GM12878 (cell line): ENCODE measurements at regions of chr2 and their contacts with region 1.

Region 1: DNA sequence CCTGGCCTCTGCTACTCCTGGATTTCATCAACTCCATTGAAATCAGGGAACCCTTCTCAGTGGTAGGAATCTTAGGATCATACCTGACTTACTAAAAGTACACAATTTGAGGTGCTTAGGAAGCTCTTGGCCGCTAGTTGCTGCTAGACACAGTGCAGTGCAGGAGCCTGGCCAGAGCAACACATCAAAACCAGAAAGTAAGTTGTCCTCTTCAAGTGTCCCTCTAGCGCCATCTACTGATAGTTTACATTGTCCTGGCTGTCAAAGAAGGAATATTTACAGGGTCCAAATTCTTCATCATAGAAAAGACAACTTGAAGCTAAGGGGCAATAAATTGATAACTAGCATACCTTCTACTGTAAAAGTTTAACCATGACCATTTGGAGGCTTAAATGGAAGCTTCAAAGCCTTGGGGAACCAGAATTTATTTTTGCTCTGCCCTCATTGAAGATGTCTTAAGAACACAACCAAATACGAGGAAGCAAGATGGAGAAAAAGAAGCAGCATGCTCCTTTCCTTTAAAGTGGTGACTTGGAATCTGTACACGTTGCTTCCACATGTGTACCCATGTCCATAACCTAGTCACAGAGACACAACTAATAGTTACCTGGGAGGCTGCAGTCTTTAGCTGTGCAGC is 889.1 kb upstream of the GCFC2 start:
- DNase-seq: peak; percentile 43
- ATAC-seq: peak; percentile 100
- H3K4me3 ChIP-seq: no peak overlapping the region
- H3K27ac ChIP-seq: no peak overlapping the region
- H3K4me1 ChIP-seq: no peaks in the 10 kb centered on the region
- H3K27me3 ChIP-seq: no peaks in the 10 kb centered on the region
- CTCF ChIP-seq: peak; percentile 77 to 93 (median 84)
- EP300 ChIP-seq: no peak
- POLR2A ChIP-seq: no peak
- RAD21 ChIP-seq: peak; percentile 89

Region 2: DNA sequence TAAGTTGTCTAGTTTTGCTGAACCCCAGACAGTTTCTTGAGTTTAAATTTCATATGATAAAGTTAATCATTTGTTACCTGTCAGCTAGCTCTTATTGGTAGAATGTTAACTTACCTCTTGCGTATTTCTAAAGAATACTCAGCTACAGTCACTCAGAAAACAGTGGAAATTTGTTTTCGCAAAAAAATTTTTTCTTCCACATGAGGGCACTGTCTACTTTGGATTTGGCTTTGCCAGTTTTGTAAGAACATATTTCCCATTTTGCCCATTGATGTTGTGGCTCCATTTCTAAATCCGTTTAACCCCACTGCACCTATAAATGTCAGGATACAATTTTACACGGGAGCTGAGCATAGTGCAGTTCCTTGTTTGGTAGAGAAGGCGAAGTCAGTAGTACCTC is 870.0 kb before region 1 on chr2:
- CTCF ChIA-PET with region 1: no interaction called
- POLR2A ChIA-PET with region 1: no interaction called
- RAD21 ChIA-PET with region 1: no interaction called
- SMC1A ChIA-PET with region 1: no interaction called
- in situ Hi-C with region 1: no loop called
- intact Hi-C with region 1: loop called (anchors 5 kb)
- DNase-seq: no peak
- ATAC-seq: no peak
- H3K4me3 ChIP-seq: no peak overlapping the region
- H3K27ac ChIP-seq: no peak overlapping the region
- H3K4me1 ChIP-seq: no peaks in the 10 kb centered on the region
- H3K27me3 ChIP-seq: no peaks in the 10 kb centered on the region
- CTCF ChIP-seq: peak in 2 of 3 experiments; percentile 30 to 35; a peak in 2 of 6 replicates
- EP300 ChIP-seq: no peak
- POLR2A ChIP-seq: no peak
- RAD21 ChIP-seq: peak; percentile 61

Region 3: DNA sequence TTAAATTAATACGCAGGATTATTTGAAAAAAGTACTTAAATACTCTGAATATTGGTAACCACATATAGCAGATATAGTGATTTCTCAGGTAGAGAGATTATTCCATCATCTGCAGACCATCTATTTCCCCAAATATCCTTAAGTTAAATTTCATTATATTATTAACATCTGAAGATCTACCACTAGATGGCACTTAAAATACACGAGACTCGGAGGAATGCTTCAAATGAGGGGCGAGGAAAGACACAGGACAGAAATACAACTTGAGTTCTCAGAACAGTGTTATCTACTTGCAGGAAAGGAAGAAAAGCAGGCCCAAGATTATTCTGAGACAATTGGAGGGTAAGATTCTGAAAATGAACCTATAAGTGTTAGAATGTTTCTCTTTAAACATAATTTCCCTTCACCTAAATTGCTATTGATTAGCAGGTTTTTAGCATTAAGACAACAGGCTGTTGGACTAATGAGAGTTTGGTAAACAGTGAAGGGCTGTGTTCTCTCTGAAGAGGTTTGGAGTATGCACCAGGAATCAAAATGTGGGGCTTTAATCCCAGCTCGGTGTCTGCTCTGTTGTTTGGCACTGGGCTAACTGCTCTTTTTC is 812.2 kb before region 1 on chr2:
- CTCF ChIA-PET with region 1: interaction called, 11 read pairs
- POLR2A ChIA-PET with region 1: no interaction called
- RAD21 ChIA-PET with region 1: interaction called, 6 read pairs
- SMC1A ChIA-PET with region 1: interaction called, 5 read pairs
- in situ Hi-C with region 1: loop called (anchors 5 kb)
- intact Hi-C with region 1: loop called (anchors 1 kb)
- DNase-seq: no peak
- ATAC-seq: peak; percentile 76
- H3K4me3 ChIP-seq: no peak overlapping the region
- H3K27ac ChIP-seq: no peak overlapping the region
- H3K4me1 ChIP-seq: peaks cover 14% of the 10 kb centered on the region
- H3K27me3 ChIP-seq: no peaks in the 10 kb centered on the region
- CTCF ChIP-seq: peak; percentile 38 to 65 (median 40)
- EP300 ChIP-seq: no peak
- POLR2A ChIP-seq: no peak
- RAD21 ChIP-seq: peak; percentile 91

Region 4: GRCh38 chr2:75896779-75897366 is 703.0 kb before region 1 on chr2:
- CTCF ChIA-PET with region 1: interaction called, 12 read pairs
- POLR2A ChIA-PET with region 1: no interaction called
- RAD21 ChIA-PET with region 1: interaction called, 9 read pairs
- SMC1A ChIA-PET with region 1: interaction called, 7 read pairs
- in situ Hi-C with region 1: loop called (anchors 5 kb)
- intact Hi-C with region 1: loop called (anchors 1 kb)
- DNase-seq: no peak
- ATAC-seq: peak; percentile 92
- H3K4me3 ChIP-seq: no peak overlapping the region
- H3K27ac ChIP-seq: no peak overlapping the region
- H3K4me1 ChIP-seq: no peaks in the 10 kb centered on the region
- H3K27me3 ChIP-seq: no peaks in the 10 kb centered on the region
- CTCF ChIP-seq: peak; percentile 74 to 88 (median 79)
- EP300 ChIP-seq: no peak
- POLR2A ChIP-seq: no peak
- RAD21 ChIP-seq: peak; percentile 59

Region 5: GRCh38 chr2:76204048-76204447 is 395.8 kb before region 1 on chr2:
- CTCF ChIA-PET with region 1: interaction called, 123 read pairs
- POLR2A ChIA-PET with region 1: no interaction called
- RAD21 ChIA-PET with region 1: interaction called, 32 read pairs
- SMC1A ChIA-PET with region 1: interaction called, 51 read pairs
- in situ Hi-C with region 1: loop called (anchors 5 kb)
- intact Hi-C with region 1: no loop called
- DNase-seq: no peak
- ATAC-seq: peak; percentile 84
- H3K4me3 ChIP-seq: no peak overlapping the region
- H3K27ac ChIP-seq: no peak overlapping the region
- H3K4me1 ChIP-seq: no peaks in the 10 kb centered on the region
- H3K27me3 ChIP-seq: no peaks in the 10 kb centered on the region
- CTCF ChIP-seq: no peak
- EP300 ChIP-seq: no peak
- POLR2A ChIP-seq: no peak
- RAD21 ChIP-seq: no peak

Region 6: GRCh38 chr2:76584474-76584873 is 15.4 kb before region 1 on chr2:
- CTCF ChIA-PET with region 1: interaction called, 10 read pairs
- POLR2A ChIA-PET with region 1: no interaction called
- RAD21 ChIA-PET with region 1: no interaction called
- SMC1A ChIA-PET with region 1: interaction called, 14 read pairs
- in situ Hi-C with region 1: no loop called
- intact Hi-C with region 1: no loop called
- DNase-seq: no peak
- ATAC-seq: peak; percentile 60
- H3K4me3 ChIP-seq: no peak overlapping the region
- H3K27ac ChIP-seq: no peak overlapping the region
- H3K4me1 ChIP-seq: no peaks in the 10 kb centered on the region
- H3K27me3 ChIP-seq: no peaks in the 10 kb centered on the region
- CTCF ChIP-seq: no peak
- EP300 ChIP-seq: no peak
- POLR2A ChIP-seq: no peak
- RAD21 ChIP-seq: no peak